ENCODE measurements at regions of chr2 and their contacts with region 1.

Region 1: DNA sequence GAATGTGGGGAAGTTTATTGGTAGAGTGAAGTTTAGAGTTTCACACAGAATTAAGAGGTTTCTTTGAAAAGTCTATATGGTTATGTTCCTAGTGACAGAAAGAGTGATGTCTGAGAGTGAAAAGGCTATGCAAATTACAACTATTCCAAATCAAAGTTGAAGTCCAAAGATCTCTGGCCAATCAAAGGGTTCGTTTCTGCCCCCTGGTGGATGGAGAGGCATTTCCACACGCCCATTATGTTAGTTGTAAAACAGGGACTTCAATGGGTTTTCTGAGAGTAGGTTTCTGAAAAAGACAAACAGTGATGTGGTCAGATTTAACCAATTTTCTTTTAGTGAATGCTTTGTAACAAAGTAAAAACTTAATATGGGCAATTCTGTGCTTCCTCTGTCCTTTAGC is 441.5 kb upstream of the POU3F3 start:
- DNase-seq: no peak
- ATAC-seq: no peak
- H3K4me3 ChIP-seq: no peak overlapping the region
- H3K4me3 Mint-ChIP-seq: no peak overlapping the region
- H3K27ac ChIP-seq: no peak overlapping the region
- H3K27ac Mint-ChIP-seq: no peak overlapping the region
- H3K4me1 ChIP-seq: no peaks in the 10 kb centered on the region
- H3K4me1 Mint-ChIP-seq: no peaks in the 10 kb centered on the region
- H3K27me3 ChIP-seq: no peaks in the 10 kb centered on the region
- H3K27me3 Mint-ChIP-seq: peaks cover 4 to 33% (median 25%) of the 10 kb centered on the region in 5 donors

Region 2: DNA sequence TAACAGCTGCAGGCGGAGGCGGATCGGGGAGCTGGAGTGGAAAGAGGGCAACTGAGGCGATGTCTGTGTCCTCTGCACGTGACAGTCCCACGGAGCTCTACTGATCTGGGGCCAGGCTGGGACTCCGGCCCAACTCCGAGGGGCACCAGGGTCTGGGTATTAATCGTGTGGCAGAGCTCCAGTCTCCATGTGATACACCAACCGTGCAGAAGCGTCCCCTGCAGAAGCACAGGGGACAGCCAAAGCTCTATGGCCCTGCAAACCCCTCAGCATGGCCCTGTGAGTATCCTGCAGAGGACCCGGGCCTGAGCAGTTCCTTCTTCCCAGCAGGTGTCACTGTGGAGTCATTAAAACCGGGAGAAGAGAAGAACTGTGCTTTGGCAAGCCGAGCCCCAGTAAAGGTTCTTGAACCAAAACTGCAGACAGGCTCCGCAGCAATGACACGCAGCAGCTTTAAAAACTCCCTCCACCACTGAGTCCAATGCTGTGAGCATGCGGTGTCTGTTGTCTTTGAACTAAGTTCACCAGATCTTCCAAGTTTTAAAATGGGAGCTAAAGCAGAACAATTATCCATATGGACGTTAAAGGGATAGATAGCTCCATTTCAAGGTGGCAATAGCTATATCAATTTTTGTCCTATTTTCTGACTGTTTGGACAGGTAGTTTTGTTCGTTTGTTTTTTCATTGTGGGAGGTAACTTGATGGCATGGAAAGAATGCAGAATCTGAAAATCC is 1571.1 kb before region 1 on chr2:
- CTCF ChIA-PET with region 1: no interaction called
- POLR2A ChIA-PET with region 1: no interaction called
- intact Hi-C with region 1: loop called in 1 of 2 experiments (anchors 10 kb)
- DNase-seq: peak in 3 of 9 donors; percentile 7
- ATAC-seq: peak; percentile 48
- H3K4me3 ChIP-seq: no peak overlapping the region
- H3K4me3 Mint-ChIP-seq: no peak overlapping the region
- H3K27ac ChIP-seq: no peak overlapping the region
- H3K27ac Mint-ChIP-seq: no peak overlapping the region
- H3K4me1 ChIP-seq: no peaks in the 10 kb centered on the region
- H3K4me1 Mint-ChIP-seq: peaks cover 0 to 1% (median 0%) of the 10 kb centered on the region in 7 donors
- H3K27me3 ChIP-seq: no peaks in the 10 kb centered on the region
- H3K27me3 Mint-ChIP-seq: peaks cover 0 to 12% (median 2%) of the 10 kb centered on the region in 5 donors

Region 3: GRCh38 chr2:102975996-102976975 is 1436.1 kb before region 1 on chr2:
- CTCF ChIA-PET with region 1: no interaction called
- POLR2A ChIA-PET with region 1: no interaction called
- intact Hi-C with region 1: loop called in 1 of 2 experiments (anchors 10 kb)
- DNase-seq: no peak
- ATAC-seq: no peak
- H3K4me3 ChIP-seq: no peak overlapping the region
- H3K4me3 Mint-ChIP-seq: no peak overlapping the region
- H3K27ac ChIP-seq: no peak overlapping the region
- H3K27ac Mint-ChIP-seq: no peak overlapping the region
- H3K4me1 ChIP-seq: no peaks in the 10 kb centered on the region
- H3K4me1 Mint-ChIP-seq: no peaks in the 10 kb centered on the region
- H3K27me3 ChIP-seq: no peaks in the 10 kb centered on the region
- H3K27me3 Mint-ChIP-seq: peaks cover 8 to 11% (median 10%) of the 10 kb centered on the region in 5 donors

Region 4: GRCh38 chr2:103161456-103162289 is 1250.7 kb before region 1 on chr2:
- CTCF ChIA-PET with region 1: no interaction called
- POLR2A ChIA-PET with region 1: no interaction called
- intact Hi-C with region 1: loop called in 1 of 2 experiments (anchors 5 kb)
- DNase-seq: no peak
- ATAC-seq: no peak
- H3K4me3 ChIP-seq: no peak overlapping the region
- H3K4me3 Mint-ChIP-seq: no peak overlapping the region
- H3K27ac ChIP-seq: no peak overlapping the region
- H3K27ac Mint-ChIP-seq: no peak overlapping the region
- H3K4me1 ChIP-seq: no peaks in the 10 kb centered on the region
- H3K4me1 Mint-ChIP-seq: no peaks in the 10 kb centered on the region
- H3K27me3 ChIP-seq: no peaks in the 10 kb centered on the region
- H3K27me3 Mint-ChIP-seq: peaks cover 0 to 7% (median under 1%) of the 10 kb centered on the region in 5 donors

Region 5: GRCh38 chr2:104430359-104430740 is 18.0 kb after region 1 on chr2:
- CTCF ChIA-PET with region 1: no interaction called
- POLR2A ChIA-PET with region 1: no interaction called
- intact Hi-C with region 1: no loop called
- DNase-seq: no peak
- ATAC-seq: no peak
- H3K4me3 ChIP-seq: no peak overlapping the region
- H3K4me3 Mint-ChIP-seq: no peak overlapping the region
- H3K27ac ChIP-seq: no peak overlapping the region
- H3K27ac Mint-ChIP-seq: no peak overlapping the region
- H3K4me1 ChIP-seq: no peaks in the 10 kb centered on the region
- H3K4me1 Mint-ChIP-seq: peaks cover 3 to 9% (median 5%) of the 10 kb centered on the region in 7 donors
- H3K27me3 ChIP-seq: no peaks in the 10 kb centered on the region
- H3K27me3 Mint-ChIP-seq: peaks cover 13 to 45% (median 32%) of the 10 kb centered on the region in 5 donors

Region 6: DNA sequence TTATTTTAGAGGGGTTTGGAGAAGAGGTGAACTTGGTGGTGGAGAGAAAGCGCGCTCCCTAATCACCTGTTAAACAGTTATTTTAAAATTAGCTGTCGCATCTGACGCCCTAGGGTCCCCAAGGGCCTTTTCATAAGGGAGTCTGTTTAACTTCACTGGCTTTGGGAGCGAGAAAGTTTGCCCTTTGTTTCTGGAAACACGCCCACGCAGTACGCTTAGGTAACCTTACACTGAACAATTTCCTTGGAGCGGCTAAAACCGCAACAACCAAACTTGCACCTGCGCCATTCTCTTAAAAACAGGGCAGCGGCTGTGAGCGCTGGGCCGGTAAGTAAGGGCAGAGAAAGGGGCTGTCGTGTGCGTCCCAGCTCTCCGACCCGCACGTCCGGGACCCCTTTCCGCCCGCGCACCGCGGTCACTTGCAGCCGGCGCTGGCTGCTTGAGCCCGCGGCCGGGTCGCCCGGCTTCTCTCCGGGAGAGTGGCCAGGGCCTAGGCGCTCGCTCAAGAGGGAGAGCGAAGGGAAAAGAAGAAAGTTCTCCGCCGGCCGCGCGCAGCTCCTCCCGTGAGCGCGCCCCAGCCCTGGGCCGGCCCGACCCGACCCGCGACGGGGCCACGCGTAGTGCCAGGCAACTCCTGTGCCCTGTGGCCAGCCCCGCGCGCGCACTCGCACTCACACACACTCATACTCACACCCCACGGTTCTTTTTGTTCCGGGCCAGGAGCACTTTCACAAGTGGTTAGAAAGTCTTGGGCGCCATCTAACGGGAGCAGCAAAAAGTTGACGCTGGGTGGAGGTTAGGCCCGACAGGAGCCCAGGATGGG is 460.7 kb after region 1 on chr2:
- CTCF ChIA-PET with region 1: no interaction called
- POLR2A ChIA-PET with region 1: no interaction called
- intact Hi-C with region 1: loop called in 1 of 2 experiments (anchors 10 kb)
- DNase-seq: peak in 4 of 9 donors; percentile 17 to 53 (median 37)
- ATAC-seq: peak; percentile 64
- H3K4me3 ChIP-seq: no peak overlapping the region
- H3K4me3 Mint-ChIP-seq: peak overlapping the region; percentile 41 to 76 (median 56)
- H3K27ac ChIP-seq: no peak overlapping the region
- H3K27ac Mint-ChIP-seq: no peak overlapping the region
- H3K4me1 ChIP-seq: no peaks in the 10 kb centered on the region
- H3K4me1 Mint-ChIP-seq: peaks cover 0 to 18% (median 12%) of the 10 kb centered on the region in 7 donors
- H3K27me3 ChIP-seq: peaks cover 0 to 3% of the 10 kb centered on the region in 2 donors
- H3K27me3 Mint-ChIP-seq: peaks cover 51 to 73% (median 61%) of the 10 kb centered on the region in 5 donors